Heart left ventricle (tissue), 16 donors: ENCODE measurements at regions of chr21 and their contacts with region 1.

Region 1: GRCh38 chr21:27476696-27477095 is 509.8 kb upstream of the ADAMTS5 start:
- DNase-seq: no peak
- ATAC-seq: peak in 1 of 4 donors; percentile 41
- H3K4me3 ChIP-seq: no peak overlapping the region
- H3K27ac ChIP-seq: no peak overlapping the region
- H3K4me1 ChIP-seq: peaks cover 0 to 6% (median 0%) of the 10 kb centered on the region in 12 donors
- H3K27me3 ChIP-seq: no peaks in the 10 kb centered on the region
- CTCF ChIP-seq: peak; percentile 35 to 70 (median 60)
- POLR2A ChIP-seq: no peak

Region 2: DNA sequence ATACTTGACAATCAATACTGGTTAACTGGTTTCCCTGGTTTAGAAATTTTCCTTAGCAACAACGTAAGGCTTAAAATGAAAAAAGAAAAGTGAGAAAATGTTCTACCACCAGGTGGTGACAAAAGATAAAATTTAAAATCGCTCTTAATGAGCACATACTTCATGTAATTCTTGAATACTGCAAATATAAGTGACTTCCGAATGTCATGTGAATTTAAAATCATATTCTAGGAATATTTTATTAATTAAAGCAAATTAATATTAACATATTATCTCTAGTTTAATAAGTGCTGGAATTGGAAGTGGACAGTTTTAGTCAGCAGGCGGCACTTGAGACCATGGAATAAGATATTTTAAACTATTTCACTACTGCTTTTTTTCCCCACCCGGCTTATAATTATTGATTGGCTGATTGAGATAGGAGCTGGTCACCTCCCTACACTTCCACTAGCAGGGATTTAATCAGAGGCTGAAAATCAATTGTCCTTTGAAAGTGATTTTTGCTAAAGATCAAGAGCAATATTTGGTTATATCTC is 626.5 kb before region 1 on chr21:
- intact Hi-C with region 1: loop called in 2 of 10 experiments (anchors 10 kb)
- DNase-seq: no peak
- ATAC-seq: no peak
- H3K4me3 ChIP-seq: peak overlapping the region in 6 of 12 donors; percentile 3 to 40 (median 8)
- H3K27ac ChIP-seq: no peak overlapping the region
- H3K4me1 ChIP-seq: peaks cover 0 to 19% (median 5%) of the 10 kb centered on the region in 12 donors
- H3K27me3 ChIP-seq: peaks cover 0 to 14% (median 0%) of the 10 kb centered on the region in 9 donors
- CTCF ChIP-seq: peak; percentile 44 to 86 (median 72)
- POLR2A ChIP-seq: no peak

Region 3: GRCh38 chr21:26881504-26882228 is 595.0 kb before region 1 on chr21:
- intact Hi-C with region 1: loop called in 5 of 10 experiments (anchors 5 to 10 kb)
- DNase-seq: no peak
- ATAC-seq: no peak
- H3K4me3 ChIP-seq: no peak overlapping the region
- H3K27ac ChIP-seq: no peak overlapping the region
- H3K4me1 ChIP-seq: peaks cover 0 to 5% (median 0%) of the 10 kb centered on the region in 12 donors
- H3K27me3 ChIP-seq: no peaks in the 10 kb centered on the region
- CTCF ChIP-seq: peak in 11 of 12 donors; percentile 16 to 57 (median 38)
- POLR2A ChIP-seq: no peak

Region 4: GRCh38 chr21:27362249-27362648 is 114.4 kb before region 1 on chr21:
- intact Hi-C with region 1: loop called in 3 of 10 experiments (anchors 2 to 10 kb)
- DNase-seq: no peak
- ATAC-seq: no peak
- H3K4me3 ChIP-seq: no peak overlapping the region
- H3K27ac ChIP-seq: no peak overlapping the region
- H3K4me1 ChIP-seq: no peaks in the 10 kb centered on the region
- H3K27me3 ChIP-seq: no peaks in the 10 kb centered on the region
- CTCF ChIP-seq: peak in 10 of 12 donors; percentile 6 to 51 (median 35)
- POLR2A ChIP-seq: no peak

Region 5: DNA sequence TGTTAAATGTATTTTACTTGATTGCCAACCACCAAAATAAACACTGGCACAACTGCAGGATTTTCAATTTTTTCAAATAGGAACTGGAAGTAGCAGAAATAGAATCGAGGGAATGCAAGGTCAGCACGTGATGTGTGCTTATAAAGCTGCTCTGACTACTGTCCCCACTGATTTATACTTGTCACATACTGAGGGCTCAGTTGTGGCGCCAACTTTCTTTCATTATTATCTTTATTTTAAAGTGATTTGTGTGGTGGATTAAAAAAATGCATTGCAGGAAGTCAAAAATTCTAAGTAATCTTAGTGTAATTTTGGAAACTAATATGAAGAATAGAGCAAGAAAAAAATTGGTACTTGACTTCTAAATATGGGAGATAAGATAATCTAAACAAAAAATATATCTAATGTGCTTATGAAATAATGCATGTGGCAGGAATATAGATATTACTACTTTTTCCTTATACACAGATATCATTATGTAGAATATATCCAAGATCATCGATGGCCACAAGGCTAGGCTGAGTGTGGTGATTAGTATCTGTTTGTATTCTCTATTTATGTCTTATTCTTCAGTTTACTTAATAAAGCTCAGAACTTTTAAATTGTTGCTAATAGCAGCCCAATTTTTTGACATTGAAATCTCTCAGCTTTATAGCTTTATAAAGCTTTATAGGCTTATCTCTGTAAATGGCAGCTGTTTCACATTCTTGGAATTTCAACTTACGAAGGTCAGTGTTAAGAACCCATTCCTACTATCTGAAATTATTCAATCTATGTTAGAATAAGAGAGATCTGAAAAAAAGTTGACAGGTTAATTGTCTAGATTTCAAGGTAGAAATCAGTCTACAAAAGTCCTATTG is 105.4 kb before region 1 on chr21:
- intact Hi-C with region 1: loop called in 3 of 10 experiments (anchors 10 kb)
- DNase-seq: no peak
- ATAC-seq: peak in 2 of 4 donors; percentile 44 to 60
- H3K4me3 ChIP-seq: no peak overlapping the region
- H3K27ac ChIP-seq: peak overlapping the region in 6 of 12 donors; percentile 0 to 45 (median 18)
- H3K4me1 ChIP-seq: peaks cover 0 to 36% (median 25%) of the 10 kb centered on the region in 12 donors
- H3K27me3 ChIP-seq: no peaks in the 10 kb centered on the region
- CTCF ChIP-seq: no peak
- POLR2A ChIP-seq: no peak

Region 6: GRCh38 chr21:27406300-27407009 is 70.2 kb before region 1 on chr21:
- intact Hi-C with region 1: no loop called
- DNase-seq: no peak
- ATAC-seq: peak; percentile 48 to 85 (median 66)
- H3K4me3 ChIP-seq: no peak overlapping the region
- H3K27ac ChIP-seq: peak overlapping the region in 10 of 12 donors; percentile 7 to 66 (median 28)
- H3K4me1 ChIP-seq: peaks cover 0 to 35% (median 18%) of the 10 kb centered on the region in 12 donors
- H3K27me3 ChIP-seq: no peaks in the 10 kb centered on the region
- CTCF ChIP-seq: no peak
- POLR2A ChIP-seq: no peak

Region 7: GRCh38 chr21:28959367-28960099 is 1482.8 kb after region 1 on chr21:
- intact Hi-C with region 1: loop called in 1 of 10 experiments (anchors 10 kb)
- DNase-seq: no peak
- ATAC-seq: no peak
- H3K4me3 ChIP-seq: no peak overlapping the region
- H3K27ac ChIP-seq: no peak overlapping the region
- H3K4me1 ChIP-seq: peaks cover 0 to 3% (median 0%) of the 10 kb centered on the region in 12 donors
- H3K27me3 ChIP-seq: no peaks in the 10 kb centered on the region
- CTCF ChIP-seq: no peak
- POLR2A ChIP-seq: no peak